HepG2 (cell line): ENCODE measurements at regions of chr15 and their contacts with region 1.

Region 1: GRCh38 chr15:77543159-77543882 is 89.4 kb downstream of the LINGO1 start:
- DNase-seq: peak; percentile 73
- ATAC-seq: peak; percentile 91
- H3K4me3 ChIP-seq: peak overlapping the region; percentile 51 to 75 (median 52)
- H3K27ac ChIP-seq: no peak overlapping the region
- H3K4me1 ChIP-seq: peaks cover 23% of the 10 kb centered on the region
- H3K27me3 ChIP-seq: peaks cover 6 to 13% of the 10 kb centered on the region in 2 experiments; a peak in 3 of 5 replicates
- CTCF ChIP-seq: peak; percentile 98
- EP300 ChIP-seq: no peak
- POLR2A ChIP-seq: no peak
- RAD21 ChIP-seq: peak; percentile 99

Region 2: GRCh38 chr15:77107531-77108355 is 435.6 kb before region 1 on chr15:
- CTCF ChIA-PET with region 1: interaction called, 15 read pairs
- POLR2A ChIA-PET with region 1: no interaction called
- in situ Hi-C with region 1: loop called (anchors 5 kb)
- intact Hi-C with region 1: no loop called
- DNase-seq: peak; percentile 41
- ATAC-seq: peak; percentile 94
- H3K4me3 ChIP-seq: no peak overlapping the region
- H3K27ac ChIP-seq: no peak overlapping the region
- H3K4me1 ChIP-seq: no peaks in the 10 kb centered on the region; the same call in 1 of the 2 replicates
- H3K27me3 ChIP-seq: no peaks in the 10 kb centered on the region
- CTCF ChIP-seq: peak; percentile 87
- EP300 ChIP-seq: no peak
- POLR2A ChIP-seq: no peak
- RAD21 ChIP-seq: peak; percentile 64

Region 3: DNA sequence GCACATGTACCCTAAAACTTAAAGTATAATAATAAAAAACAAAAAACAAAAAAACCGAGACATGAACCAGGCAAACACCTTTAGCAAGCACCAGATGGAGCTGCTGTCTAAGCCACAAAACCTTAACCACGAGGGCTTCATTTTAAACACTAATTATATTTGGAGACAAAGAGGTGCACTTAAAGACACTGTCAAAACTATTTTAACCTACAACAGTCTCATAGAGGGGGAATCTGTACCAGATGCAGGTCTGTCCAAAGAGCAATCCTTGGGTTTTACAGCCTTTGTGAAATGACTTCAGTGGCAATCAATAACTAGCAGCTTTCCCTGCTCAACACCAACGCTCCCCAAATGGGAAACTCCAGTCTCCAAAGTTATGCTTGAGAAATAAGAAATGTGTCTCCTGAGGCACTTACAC is 356.7 kb before region 1 on chr15:
- CTCF ChIA-PET with region 1: no interaction called
- POLR2A ChIA-PET with region 1: no interaction called
- in situ Hi-C with region 1: loop called (anchors 5 kb)
- intact Hi-C with region 1: loop called (anchors 5 kb)
- DNase-seq: no peak
- ATAC-seq: peak; percentile 60; the same call in 2 of the 3 replicates
- H3K4me3 ChIP-seq: no peak overlapping the region
- H3K27ac ChIP-seq: no peak overlapping the region
- H3K4me1 ChIP-seq: peaks cover 30% of the 10 kb centered on the region
- H3K27me3 ChIP-seq: no peaks in the 10 kb centered on the region
- CTCF ChIP-seq: peak; percentile 52
- EP300 ChIP-seq: no peak
- POLR2A ChIP-seq: no peak
- RAD21 ChIP-seq: peak; percentile 49; the same call in 1 of the 2 replicates

Region 4: GRCh38 chr15:77507911-77508310 is 35.4 kb before region 1 on chr15:
- CTCF ChIA-PET with region 1: no interaction called
- POLR2A ChIA-PET with region 1: interaction called, 4 read pairs
- in situ Hi-C with region 1: loop called (anchors 5 kb)
- intact Hi-C with region 1: no loop called
- DNase-seq: peak; percentile 74
- ATAC-seq: peak; percentile 88
- H3K4me3 ChIP-seq: peak overlapping the region; percentile 8 to 62 (median 39)
- H3K27ac ChIP-seq: peak overlapping the region; percentile 14
- H3K4me1 ChIP-seq: peaks cover 79% of the 10 kb centered on the region
- H3K27me3 ChIP-seq: no peaks in the 10 kb centered on the region
- CTCF ChIP-seq: no peak
- EP300 ChIP-seq: no peak
- POLR2A ChIP-seq: no peak
- RAD21 ChIP-seq: no peak

Region 5: DNA sequence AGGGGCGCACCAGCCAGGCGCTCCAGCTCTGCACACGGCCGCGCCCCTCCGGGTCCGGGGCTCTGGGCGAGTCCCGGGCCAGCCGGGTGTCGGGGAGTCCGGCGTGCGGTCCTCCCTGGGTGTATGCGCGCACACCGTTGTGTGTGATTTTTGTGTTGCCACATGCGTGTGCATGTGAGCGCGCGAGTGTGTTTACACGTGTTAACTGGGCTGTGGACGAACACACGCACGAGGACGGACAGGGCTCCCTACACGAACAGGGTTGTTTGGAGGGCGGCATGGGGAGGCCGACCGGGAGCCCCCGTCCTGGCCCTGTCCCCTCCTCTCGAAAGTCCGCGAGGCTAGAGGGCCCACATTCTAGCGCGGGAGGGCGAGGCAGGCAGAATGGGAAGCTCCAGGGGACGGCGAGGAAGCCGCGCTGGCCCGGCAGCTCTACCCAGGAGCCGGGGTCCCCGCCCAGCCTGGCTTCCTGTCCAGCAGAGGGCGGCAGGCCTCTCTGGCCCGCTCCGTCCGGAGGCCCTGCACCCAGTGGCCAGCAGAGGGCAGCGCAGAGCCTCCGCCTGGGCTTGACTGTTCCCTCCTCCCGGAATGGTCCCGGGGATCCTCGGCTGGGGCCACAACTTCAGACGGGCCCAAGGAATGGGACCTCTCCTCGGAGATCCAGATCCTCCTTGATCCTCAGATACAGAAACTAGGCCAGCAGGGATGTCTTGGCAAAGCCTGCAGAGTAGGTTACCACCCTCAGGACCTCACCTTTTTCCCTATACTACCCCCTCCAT is 90.0 kb after region 1 on chr15:
- CTCF ChIA-PET with region 1: interaction called, 3 read pairs
- POLR2A ChIA-PET with region 1: no interaction called
- in situ Hi-C with region 1: no loop called
- intact Hi-C with region 1: loop called (anchors 5 kb)
- DNase-seq: peak; percentile 62
- ATAC-seq: peak; percentile 94
- H3K4me3 ChIP-seq: peak overlapping the region; percentile 35 to 74 (median 43); a peak in 5 of 6 replicates
- H3K27ac ChIP-seq: no peak overlapping the region
- H3K4me1 ChIP-seq: peaks cover 5% of the 10 kb centered on the region; the same call in 1 of the 2 replicates
- H3K27me3 ChIP-seq: peaks cover 6 to 43% of the 10 kb centered on the region in 2 experiments; a peak in 4 of 5 replicates
- CTCF ChIP-seq: peak; percentile 100
- EP300 ChIP-seq: no peak
- POLR2A ChIP-seq: no peak
- RAD21 ChIP-seq: peak; percentile 96